ENCODE measurements at regions of chr2 and their contacts with region 1.

Region 1: DNA sequence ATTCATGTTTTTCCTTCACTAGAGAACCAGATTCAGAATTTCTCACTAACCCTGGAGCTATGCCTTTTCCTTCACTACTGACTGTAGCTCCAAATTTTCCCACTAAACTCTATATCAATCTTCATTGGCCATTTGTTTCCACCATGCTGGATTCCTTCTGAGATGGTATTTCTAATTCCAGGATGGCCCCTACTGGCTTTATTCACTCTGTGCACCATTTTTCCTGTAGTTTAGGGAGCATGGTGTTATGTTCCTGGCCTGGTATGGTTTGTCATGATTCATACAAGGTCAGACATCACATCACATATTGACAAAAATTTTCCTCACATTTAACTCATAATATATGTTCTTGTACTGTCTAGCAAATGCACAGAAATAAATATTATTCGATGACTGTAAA is 229.2 kb upstream of the TFPI start:
- DNase-seq: no peak
- H3K4me3 Mint-ChIP-seq: no peak overlapping the region
- H3K27ac Mint-ChIP-seq: no peak overlapping the region
- H3K4me1 Mint-ChIP-seq: peaks cover 16% of the 10 kb centered on the region
- H3K27me3 Mint-ChIP-seq: no peaks in the 10 kb centered on the region
- CTCF ChIP-seq: no peak

Region 2: GRCh38 chr2:187819624-187820023 is 36.2 kb after region 1 on chr2:
- CTCF ChIA-PET with region 1: no interaction called
- intact Hi-C with region 1: loop called (anchors 5 kb)
- DNase-seq: no peak
- H3K4me3 Mint-ChIP-seq: no peak overlapping the region
- H3K27ac Mint-ChIP-seq: no peak overlapping the region
- H3K4me1 Mint-ChIP-seq: peaks cover 18% of the 10 kb centered on the region
- H3K27me3 Mint-ChIP-seq: no peaks in the 10 kb centered on the region
- CTCF ChIP-seq: no peak